ENCODE measurements at regions of chr16 and their contacts with region 1.

Region 1: GRCh38 chr16:79071424-79071823 is 529.1 kb downstream of the MAF start:
- DNase-seq: no peak
- H3K4me3 Mint-ChIP-seq: no peak overlapping the region
- H3K27ac Mint-ChIP-seq: no peak overlapping the region
- H3K4me1 Mint-ChIP-seq: peaks cover 56% of the 10 kb centered on the region
- H3K27me3 Mint-ChIP-seq: no peaks in the 10 kb centered on the region

Region 2: GRCh38 chr16:78778101-78779004 is 293.1 kb before region 1 on chr16:
- intact Hi-C with region 1: loop called (anchors 1 kb)
- DNase-seq: peak; percentile 87
- H3K4me3 Mint-ChIP-seq: peak overlapping the region; percentile 63
- H3K27ac Mint-ChIP-seq: peak overlapping the region; percentile 94
- H3K4me1 Mint-ChIP-seq: peaks cover 53% of the 10 kb centered on the region
- H3K27me3 Mint-ChIP-seq: no peaks in the 10 kb centered on the region

Region 3: GRCh38 chr16:79089735-79090284 is 18.4 kb after region 1 on chr16:
- intact Hi-C with region 1: loop called (anchors 1 kb)
- DNase-seq: peak; percentile 91
- H3K4me3 Mint-ChIP-seq: peak overlapping the region; percentile 75
- H3K27ac Mint-ChIP-seq: peak overlapping the region; percentile 94
- H3K4me1 Mint-ChIP-seq: peaks cover 49% of the 10 kb centered on the region
- H3K27me3 Mint-ChIP-seq: peaks cover 5% of the 10 kb centered on the region

Region 4: DNA sequence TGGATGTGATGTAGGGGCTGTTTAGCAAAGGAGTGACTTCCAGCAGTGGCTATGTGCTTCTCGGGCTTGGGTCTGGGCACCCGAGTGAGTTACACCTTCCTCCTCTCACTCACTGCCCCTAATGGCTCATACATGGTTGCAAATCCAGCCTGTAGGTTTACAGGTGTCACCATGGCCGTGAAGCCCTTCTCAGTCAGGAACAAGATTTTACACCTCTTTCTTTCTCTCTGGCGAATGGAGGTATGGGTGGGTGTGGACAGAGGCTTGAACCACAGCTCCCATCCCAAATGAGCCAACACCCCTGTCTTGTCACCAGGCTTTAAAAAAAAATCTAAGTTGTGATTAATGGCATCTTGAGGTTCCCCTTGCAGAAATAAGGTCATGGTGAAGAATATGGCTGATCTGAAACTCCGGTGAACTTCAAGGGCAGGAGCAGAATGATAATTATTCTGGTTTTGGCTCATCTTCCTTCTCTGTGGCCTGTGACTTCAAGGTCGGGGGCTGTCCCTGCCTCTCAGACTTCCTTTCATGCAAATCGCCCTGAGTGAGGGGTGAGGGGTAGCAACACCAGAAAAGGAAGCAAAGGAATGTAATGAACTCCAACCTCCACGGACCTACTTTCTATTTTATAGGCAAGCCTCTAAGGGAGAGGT is 197.9 kb after region 1 on chr16:
- intact Hi-C with region 1: loop called (anchors 1 kb)
- DNase-seq: peak; percentile 88
- H3K4me3 Mint-ChIP-seq: peak overlapping the region; percentile 56
- H3K27ac Mint-ChIP-seq: peak overlapping the region; percentile 86
- H3K4me1 Mint-ChIP-seq: peaks cover 74% of the 10 kb centered on the region
- H3K27me3 Mint-ChIP-seq: peaks cover 9% of the 10 kb centered on the region

Region 5: GRCh38 chr16:79628501-79628975 is 557.1 kb after region 1 on chr16:
- intact Hi-C with region 1: loop called (anchors 1 kb)
- DNase-seq: peak; percentile 91
- H3K4me3 Mint-ChIP-seq: peak overlapping the region; percentile 70
- H3K27ac Mint-ChIP-seq: peak overlapping the region; percentile 88
- H3K4me1 Mint-ChIP-seq: peaks cover 57% of the 10 kb centered on the region
- H3K27me3 Mint-ChIP-seq: peaks cover 15% of the 10 kb centered on the region

Region 6: DNA sequence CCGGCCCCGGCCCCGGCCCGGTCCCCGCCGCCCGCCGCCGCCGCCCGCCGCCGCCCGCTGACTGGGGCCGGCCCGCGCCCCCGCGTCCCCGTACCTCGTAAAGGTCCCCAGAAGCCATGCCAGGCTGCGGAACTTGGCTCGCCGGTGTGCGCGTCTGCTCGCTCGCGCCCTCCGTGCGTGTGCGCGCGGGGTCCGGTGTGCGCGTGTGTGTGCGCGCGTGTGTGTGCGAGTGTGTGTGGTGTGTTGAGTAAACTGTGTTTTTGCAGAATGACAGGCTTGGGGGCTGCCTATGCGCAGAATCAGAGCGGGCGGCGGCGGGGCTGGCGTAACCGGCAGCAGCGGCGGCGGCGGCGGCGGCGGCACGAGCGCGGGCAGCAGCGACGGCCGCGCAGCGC is 1732.6 kb after region 1 on chr16:
- intact Hi-C with region 1: loop called (anchors 10 kb)
- DNase-seq: peak; percentile 89
- H3K4me3 Mint-ChIP-seq: peak overlapping the region; percentile 93
- H3K27ac Mint-ChIP-seq: peak overlapping the region; percentile 97
- H3K4me1 Mint-ChIP-seq: peaks cover 45% of the 10 kb centered on the region
- H3K27me3 Mint-ChIP-seq: no peaks in the 10 kb centered on the region

Measured in activated CD4-positive, alpha-beta T cell treated with anti-CD3 and anti-CD28 coated beads, Interleukin-2, amount 10 ng/mL, durations not matched to agents 24 days and 14 days (primary cell).